Posterior vena cava (tissue), 2 donors: ENCODE measurements at regions of chr7 and their contacts with region 1.

Region 1: DNA sequence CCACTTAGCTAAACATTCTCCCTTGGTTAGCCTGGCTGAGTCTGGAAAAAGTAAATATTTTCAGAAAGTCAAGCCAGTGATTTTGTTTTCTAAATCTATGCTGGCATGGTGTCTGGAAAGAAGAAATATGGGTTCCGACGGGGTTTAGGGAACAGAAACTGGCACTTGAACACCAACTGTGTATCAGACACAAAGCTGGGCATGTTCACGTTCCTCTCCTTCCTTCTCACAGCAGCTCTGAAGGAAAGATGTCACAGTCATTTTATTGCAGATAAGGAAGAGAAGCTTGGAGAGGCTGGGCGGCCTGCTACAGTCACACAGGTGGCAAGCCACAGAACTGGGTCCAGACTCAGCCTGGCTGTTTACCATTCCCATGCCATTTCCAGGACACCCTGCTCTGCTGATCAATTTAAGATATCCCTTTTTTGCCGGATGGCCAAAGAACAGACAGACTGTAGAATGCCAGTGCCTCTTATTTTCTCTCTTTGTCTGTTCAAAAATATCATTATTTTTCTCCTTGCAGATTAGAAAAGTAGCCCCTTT is 118.8 kb downstream of the HERPUD2 start:
- DNase-seq: no peak

Region 2: DNA sequence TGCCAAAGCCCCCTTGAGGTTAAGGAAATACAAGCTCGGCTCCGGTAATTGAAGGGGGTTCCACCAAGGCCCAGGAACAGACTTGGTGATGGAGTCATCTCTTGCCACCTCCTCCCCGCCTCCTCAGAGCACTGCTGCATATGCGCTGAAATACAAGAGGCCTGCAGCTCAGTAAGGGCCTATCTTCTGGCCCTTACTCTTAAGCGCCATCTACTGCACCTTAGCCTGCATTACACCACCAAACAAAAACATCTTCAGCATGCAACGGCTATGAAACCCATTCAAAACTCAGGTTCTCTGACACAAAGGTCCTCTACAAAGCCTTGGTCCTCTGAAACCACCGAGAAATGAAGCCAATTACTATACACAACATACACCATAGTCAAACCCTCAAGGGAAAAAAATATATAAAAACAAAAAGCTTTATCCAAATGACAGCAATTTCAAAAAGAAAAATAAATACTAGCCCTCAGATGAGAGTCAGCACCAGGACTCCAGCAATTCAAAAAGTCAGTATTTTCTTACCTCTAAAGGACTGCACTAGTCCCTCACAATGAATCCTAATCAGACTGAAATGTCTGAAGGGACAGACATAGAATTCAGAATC is 145.5 kb before region 1 on chr7:
- intact Hi-C with region 1: no loop called
- DNase-seq: no peak

Region 3: GRCh38 chr7:35537067-35538023 is 38.8 kb before region 1 on chr7:
- intact Hi-C with region 1: no loop called
- DNase-seq: peak; percentile 95

Region 4: GRCh38 chr7:35605760-35606159 is 29.7 kb after region 1 on chr7:
- intact Hi-C with region 1: loop called in 1 of 2 experiments (anchors 1 kb)
- DNase-seq: no peak